Psoas muscle (tissue), 8 donors: ENCODE measurements at regions of chr15 and their contacts with region 1.

Region 1: GRCh38 chr15:74545880-74546656 is 5.0 kb downstream of the ARID3B start:
- DNase-seq: peak; percentile 97 to 98
- ATAC-seq: peak; percentile 96 to 97 (median 97)
- H3K4me3 ChIP-seq: no peak overlapping the region
- H3K27ac ChIP-seq: peak overlapping the region; percentile 71
- H3K4me1 ChIP-seq: peaks cover 33% of the 10 kb centered on the region
- H3K27me3 ChIP-seq: no peaks in the 10 kb centered on the region
- CTCF ChIP-seq: no peak

Region 2: DNA sequence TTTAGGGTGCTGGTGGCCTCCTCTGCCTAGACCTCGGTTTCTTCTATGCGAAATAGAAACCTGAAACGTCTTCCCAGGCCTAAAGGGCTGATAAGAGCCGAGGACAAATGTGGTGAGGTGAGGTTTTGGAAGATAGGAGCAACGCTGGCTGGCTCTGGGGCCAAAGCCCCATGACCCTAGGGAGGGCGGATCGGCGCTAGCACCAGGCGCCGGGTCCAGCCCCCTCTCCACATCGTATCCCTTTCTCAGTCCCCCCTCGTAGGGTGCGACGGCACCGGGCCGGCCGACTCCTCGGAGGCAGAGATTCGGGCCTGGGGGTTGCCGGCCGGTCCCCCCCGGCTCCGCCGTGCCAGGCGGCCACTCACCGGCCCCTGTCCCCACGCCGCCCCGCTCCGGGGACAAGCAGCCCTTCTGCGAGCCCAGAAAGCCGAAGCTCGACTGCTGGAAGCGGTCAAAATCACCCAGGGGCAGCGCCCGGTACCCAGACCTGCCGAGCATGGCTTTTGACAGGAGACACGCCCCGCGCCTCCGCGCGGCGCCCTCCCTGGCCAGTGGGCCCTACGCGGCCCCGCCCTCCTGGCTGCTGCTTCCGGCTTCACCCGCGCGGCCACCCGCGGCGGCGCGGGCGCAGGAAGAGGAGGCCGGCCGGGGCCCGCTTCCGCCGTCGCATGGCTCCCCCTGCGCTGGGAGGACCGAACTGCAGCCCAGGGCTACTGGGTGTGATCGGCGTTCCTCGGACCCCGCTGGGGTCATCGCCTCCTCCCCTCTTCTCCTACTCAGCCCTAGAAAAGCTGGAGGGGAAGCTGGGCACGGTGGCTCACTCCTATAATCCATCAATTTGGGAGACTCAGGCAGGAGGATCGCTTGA is 554.1 kb before region 1 on chr15 and contains the start of gene STOML1:
- intact Hi-C with region 1: no loop called
- DNase-seq: peak; percentile 96 to 97
- ATAC-seq: peak; percentile 89 to 91 (median 90)
- H3K4me3 ChIP-seq: peak within 1 kb of the TSS; percentile 97
- H3K27ac ChIP-seq: peak within 1 kb of the TSS; percentile 91
- H3K4me1 ChIP-seq: peaks cover 52% of the 10 kb centered on the region
- H3K27me3 ChIP-seq: no peaks in the 10 kb centered on the region
- CTCF ChIP-seq: peak; percentile 93
- total RNA-seq, gene STOML1: 18.3 to 26.2 (median 22.7) TPM

Region 3: DNA sequence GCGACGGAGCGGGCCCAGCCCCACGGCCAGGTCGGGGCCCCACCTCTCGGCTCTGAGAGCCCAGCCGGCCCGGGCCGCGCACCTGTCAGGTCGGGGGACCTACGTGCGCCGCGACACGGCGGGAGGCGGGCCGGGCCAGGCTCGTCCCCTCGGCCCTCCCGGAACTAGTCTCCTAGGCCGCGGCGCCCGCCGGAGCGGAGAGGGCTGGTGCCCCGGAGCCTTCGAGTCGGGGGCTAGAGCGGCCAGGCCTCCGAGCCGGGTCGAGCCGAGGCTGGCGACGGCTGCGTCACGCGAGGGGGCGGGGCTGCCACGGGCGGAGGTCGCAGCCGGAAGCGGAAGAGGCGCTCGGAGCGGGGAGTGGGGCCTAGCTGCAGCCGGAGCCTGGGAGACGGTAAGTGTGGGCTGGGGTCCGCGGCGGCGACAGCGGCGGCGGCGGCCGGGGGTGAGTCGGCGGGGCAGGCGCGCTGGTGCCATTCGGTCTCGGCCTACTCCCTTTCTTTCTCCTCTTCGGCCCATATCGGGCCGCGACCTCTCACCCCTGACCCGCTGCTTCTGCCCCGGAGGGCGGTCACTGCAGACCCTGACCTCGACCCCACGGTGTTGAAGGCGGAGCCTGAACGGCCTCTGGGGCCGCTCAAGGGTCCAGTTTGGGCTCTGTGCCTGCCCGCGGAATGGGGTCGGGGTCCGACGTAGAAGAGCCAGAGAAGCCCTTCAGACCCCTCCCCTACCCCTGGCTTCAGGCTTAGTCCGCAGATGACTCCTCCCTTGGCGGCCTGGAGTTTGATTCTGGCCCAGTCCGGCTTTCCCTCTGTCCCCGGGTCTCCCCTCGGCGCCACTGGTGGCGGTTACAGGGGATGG is 69.7 kb after region 1 on chr15 and contains the start of gene CLK3:
- intact Hi-C with region 1: loop called (anchors 1 to 5 kb)
- DNase-seq: peak; percentile 97 to 98
- ATAC-seq: peak; percentile 88 to 90 (median 90)
- H3K4me3 ChIP-seq: peak within 1 kb of the TSS; percentile 99
- H3K27ac ChIP-seq: peak within 1 kb of the TSS; percentile 100
- H3K4me1 ChIP-seq: peaks cover 38% of the 10 kb centered on the region
- H3K27me3 ChIP-seq: no peaks in the 10 kb centered on the region
- CTCF ChIP-seq: no peak
- total RNA-seq, gene CLK3: 40.9 to 57.5 (median 46.5) TPM